ENCODE measurements at regions of chr18 and their contacts with region 1.

Region 1: GRCh38 chr18:76098674-76099411 is 396.2 kb downstream of the ZNF516 start:
- DNase-seq: no peak
- H3K4me3 ChIP-seq: no peak overlapping the region
- H3K27me3 ChIP-seq: no peaks in the 10 kb centered on the region
- CTCF ChIP-seq: no peak

Region 2: GRCh38 chr18:75784398-75784789 is 314.4 kb before region 1 on chr18:
- CTCF ChIA-PET with region 1: no interaction called
- POLR2A ChIA-PET with region 1: interaction called, 13 read pairs
- DNase-seq: no peak
- H3K4me3 ChIP-seq: no peak overlapping the region
- H3K27me3 ChIP-seq: 0 out of 2 replicates have a peak, but pooled peaks cover 3% of the 10 kb centered on the region
- CTCF ChIP-seq: no peak

Region 3: DNA sequence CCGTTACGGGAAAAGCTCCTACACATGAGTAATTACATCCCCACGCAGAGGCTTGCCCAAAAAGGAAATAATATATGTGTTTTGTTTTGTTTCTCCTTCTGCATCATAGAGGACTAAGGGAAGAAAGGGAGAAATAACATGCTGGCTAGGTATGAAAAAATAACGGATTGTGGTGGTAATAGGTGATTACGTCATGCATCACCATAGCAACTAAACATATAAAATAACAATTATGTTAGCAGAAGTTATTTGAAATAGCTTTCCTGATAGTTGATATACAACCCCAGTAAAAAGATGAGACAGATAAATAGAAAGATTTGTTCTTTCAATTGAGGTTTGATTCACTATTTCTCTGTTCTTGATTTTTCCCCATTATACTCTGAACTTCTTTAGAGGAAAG is 121.8 kb before region 1 on chr18:
- CTCF ChIA-PET with region 1: no interaction called
- POLR2A ChIA-PET with region 1: no interaction called
- DNase-seq: peak; percentile 12
- H3K4me3 ChIP-seq: no peak overlapping the region
- H3K27me3 ChIP-seq: no peaks in the 10 kb centered on the region
- CTCF ChIP-seq: no peak